Head of caudate nucleus (tissue), 42 donors: ENCODE measurements at regions of chr15 and their contacts with region 1.

Region 1: GRCh38 chr15:63610200-63610841 is 13.1 kb downstream of the FBXL22 start:
- DNase-seq: peak; percentile 51 to 93 (median 83)

Region 2: GRCh38 chr15:64067564-64068030 is 457.3 kb after region 1 on chr15:
- intact Hi-C with region 1: loop called (anchors 5 kb)
- DNase-seq: peak; percentile 15 to 92 (median 76)